MCF 10A (cell line): ENCODE measurements at regions of chr3 and their contacts with region 1.

Region 1: DNA sequence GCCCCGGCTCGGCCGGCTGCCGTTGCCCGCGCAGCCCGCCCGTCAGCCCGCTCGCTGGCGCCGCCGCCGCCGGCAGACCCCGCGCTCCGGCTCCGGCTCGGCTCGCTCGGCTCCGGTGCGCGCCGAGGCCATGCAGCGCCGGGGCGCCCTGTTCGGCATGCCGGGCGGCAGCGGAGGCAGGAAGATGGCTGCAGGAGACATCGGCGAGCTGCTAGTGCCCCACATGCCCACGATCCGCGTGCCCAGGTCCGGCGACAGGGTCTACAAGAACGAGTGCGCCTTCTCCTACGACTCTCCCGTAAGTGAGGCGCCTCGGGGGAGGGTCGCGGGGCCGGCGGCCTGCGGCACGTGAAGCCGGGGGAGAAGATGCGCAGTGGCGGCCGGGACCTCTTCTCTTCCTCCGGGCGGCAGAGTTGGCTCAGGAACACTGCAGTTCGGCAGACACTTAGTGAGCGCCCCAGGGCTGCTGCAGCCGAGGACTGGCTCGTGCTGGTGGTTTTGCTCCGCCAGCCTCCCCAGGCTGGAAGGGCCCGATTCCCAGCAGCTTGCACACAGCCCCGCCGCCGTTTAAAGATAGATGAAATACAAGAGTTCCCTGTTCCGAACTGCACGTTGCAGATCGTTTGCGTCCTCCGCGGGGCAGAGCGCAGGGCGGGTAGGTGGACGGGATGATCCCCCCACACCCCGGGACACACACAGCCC is 407 bp downstream of the USP13 start:
- DNase-seq: peak; percentile 75
- H3K4me3 Mint-ChIP-seq: peak overlapping the region; percentile 85
- H3K27ac Mint-ChIP-seq: peak overlapping the region; percentile 82
- H3K4me1 Mint-ChIP-seq: peaks cover 8% of the 10 kb centered on the region
- H3K27me3 Mint-ChIP-seq: no peaks in the 10 kb centered on the region
- CTCF ChIP-seq: no peak

Region 2: GRCh38 chr3:179604321-179605078 is 48.7 kb before region 1 on chr3 and contains the starts of genes MRPL47 and NDUFB5:
- CTCF ChIA-PET with region 1: interaction called, 4 read pairs
- POLR2A ChIA-PET with region 1: interaction called, 20 read pairs
- intact Hi-C with region 1: no loop called
- DNase-seq: peak; percentile 97
- H3K4me3 Mint-ChIP-seq: peak within 1 kb of the TSS; percentile 100
- H3K27ac Mint-ChIP-seq: peak within 1 kb of the TSS; percentile 100
- H3K4me1 Mint-ChIP-seq: peaks cover 9% of the 10 kb centered on the region
- H3K27me3 Mint-ChIP-seq: no peaks in the 10 kb centered on the region
- CTCF ChIP-seq: no peak
- total RNA-seq, gene MRPL47: 58.3 and 63.4 TPM in 2 replicates
- total RNA-seq, gene NDUFB5: 88.2 and 115 TPM in 2 replicates

Region 3: GRCh38 chr3:179672908-179673307 is 19.7 kb after region 1 on chr3:
- CTCF ChIA-PET with region 1: interaction called, 10 read pairs
- POLR2A ChIA-PET with region 1: interaction called, 3 read pairs
- intact Hi-C with region 1: no loop called
- DNase-seq: no peak
- H3K4me3 Mint-ChIP-seq: no peak overlapping the region
- H3K27ac Mint-ChIP-seq: no peak overlapping the region
- H3K4me1 Mint-ChIP-seq: peaks cover 12% of the 10 kb centered on the region
- H3K27me3 Mint-ChIP-seq: no peaks in the 10 kb centered on the region
- CTCF ChIP-seq: no peak

Region 4: GRCh38 chr3:179760944-179761343 is 107.7 kb after region 1 on chr3:
- CTCF ChIA-PET with region 1: no interaction called
- POLR2A ChIA-PET with region 1: no interaction called
- intact Hi-C with region 1: loop called (anchors 5 kb)
- DNase-seq: peak; percentile 84
- H3K4me3 Mint-ChIP-seq: no peak overlapping the region
- H3K27ac Mint-ChIP-seq: no peak overlapping the region
- H3K4me1 Mint-ChIP-seq: peaks cover 7% of the 10 kb centered on the region
- H3K27me3 Mint-ChIP-seq: no peaks in the 10 kb centered on the region
- CTCF ChIP-seq: no peak